Left cardiac atrium (tissue), 4 donors: ENCODE measurements at regions of chr10 and their contacts with region 1.

Region 1: DNA sequence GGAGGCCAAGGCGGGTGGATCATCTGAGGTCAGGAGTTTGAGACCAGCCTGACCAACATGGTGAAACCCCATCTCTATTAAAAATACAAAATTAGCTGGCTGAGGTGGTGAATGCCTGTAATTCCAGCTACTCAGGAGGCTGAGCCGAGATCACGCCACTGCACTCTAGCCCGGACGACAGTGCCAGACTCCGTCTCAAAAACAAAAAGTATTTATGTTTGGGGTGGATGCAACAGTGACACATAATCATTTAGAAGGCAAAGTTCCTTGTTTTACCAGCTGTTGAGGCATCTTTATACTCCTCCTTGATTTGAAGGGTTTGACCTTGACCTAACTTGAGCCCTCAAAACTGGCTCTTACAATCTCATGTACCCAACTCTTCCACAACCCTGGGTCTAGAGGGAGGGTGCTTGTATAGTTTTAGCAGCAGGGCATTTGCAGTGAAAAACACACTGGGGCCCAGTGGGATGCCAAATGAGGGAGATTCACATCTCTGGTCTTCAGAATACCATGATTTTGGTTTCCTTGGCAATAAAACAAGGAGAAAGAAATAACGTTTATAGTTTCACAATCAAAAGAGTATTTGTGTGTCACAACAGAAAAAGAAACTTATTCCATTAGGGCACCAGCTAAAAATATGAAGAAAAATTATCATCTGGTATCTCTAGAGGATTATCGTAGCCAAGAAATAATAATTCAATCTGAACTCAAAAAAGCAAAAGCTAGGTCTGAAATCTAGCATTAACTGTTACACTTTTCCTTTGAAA is 14.2 kb upstream of the TMEM254 start:
- DNase-seq: no peak
- ATAC-seq: peak in 1 of 2 donors; percentile 57

Region 2: GRCh38 chr10:80126876-80127275 is 62.6 kb after region 1 on chr10:
- intact Hi-C with region 1: loop called in 1 of 2 experiments (anchors 5 kb)
- DNase-seq: peak; percentile 37
- ATAC-seq: peak; percentile 45 to 85

Region 3: DNA sequence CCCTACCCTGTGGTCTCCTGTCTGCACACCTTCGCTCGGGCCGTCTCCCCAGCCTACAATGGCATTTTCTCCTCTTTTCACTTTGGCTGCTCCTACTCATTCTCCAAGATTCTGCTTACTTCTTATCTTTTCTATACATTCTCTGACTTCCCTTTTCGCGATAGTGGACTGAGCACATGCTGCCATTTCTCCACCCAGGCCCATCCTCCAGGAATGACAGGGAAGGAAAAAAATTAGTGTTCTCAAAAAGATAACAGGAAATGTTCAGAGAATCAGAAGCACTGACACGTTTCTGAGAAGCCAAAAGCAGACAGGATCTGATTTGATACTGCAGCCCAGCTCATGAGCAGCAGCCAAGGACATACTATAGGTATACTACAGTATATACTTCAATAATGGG is 147.5 kb after region 1 on chr10:
- intact Hi-C with region 1: loop called in 1 of 2 experiments (anchors 10 kb)
- DNase-seq: no peak
- ATAC-seq: no peak